Mammary epithelial cell (primary cell): ENCODE measurements at regions of chr2 and their contacts with region 1.

Region 1: DNA sequence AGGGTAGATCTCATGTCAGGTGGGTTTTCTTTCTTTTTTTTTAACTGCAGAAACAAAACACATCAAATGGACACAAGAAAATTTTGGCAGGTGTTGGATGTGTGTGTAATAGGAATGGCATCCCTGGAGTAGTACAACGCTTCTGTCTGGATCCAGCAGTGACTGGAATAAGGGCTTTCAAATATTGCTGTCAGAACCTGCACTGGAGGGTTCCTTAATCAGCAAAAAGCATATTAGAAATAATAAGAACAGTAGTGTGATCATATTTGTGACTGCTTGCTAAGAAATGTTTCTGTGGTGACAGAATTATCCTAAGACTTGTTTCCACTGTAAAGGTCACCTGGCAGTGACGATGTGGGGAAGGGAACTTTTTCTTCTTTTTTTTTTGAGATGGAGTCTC is 30.8 kb downstream of the CREG2 start:
- DNase-seq: peak; percentile 75
- H3K4me3 ChIP-seq: no peak overlapping the region
- H3K27ac ChIP-seq: peak overlapping the region; percentile 16
- H3K4me1 ChIP-seq: peaks cover 52% of the 10 kb centered on the region
- H3K27me3 ChIP-seq: no peaks in the 10 kb centered on the region
- CTCF ChIP-seq: no peak

Region 2: DNA sequence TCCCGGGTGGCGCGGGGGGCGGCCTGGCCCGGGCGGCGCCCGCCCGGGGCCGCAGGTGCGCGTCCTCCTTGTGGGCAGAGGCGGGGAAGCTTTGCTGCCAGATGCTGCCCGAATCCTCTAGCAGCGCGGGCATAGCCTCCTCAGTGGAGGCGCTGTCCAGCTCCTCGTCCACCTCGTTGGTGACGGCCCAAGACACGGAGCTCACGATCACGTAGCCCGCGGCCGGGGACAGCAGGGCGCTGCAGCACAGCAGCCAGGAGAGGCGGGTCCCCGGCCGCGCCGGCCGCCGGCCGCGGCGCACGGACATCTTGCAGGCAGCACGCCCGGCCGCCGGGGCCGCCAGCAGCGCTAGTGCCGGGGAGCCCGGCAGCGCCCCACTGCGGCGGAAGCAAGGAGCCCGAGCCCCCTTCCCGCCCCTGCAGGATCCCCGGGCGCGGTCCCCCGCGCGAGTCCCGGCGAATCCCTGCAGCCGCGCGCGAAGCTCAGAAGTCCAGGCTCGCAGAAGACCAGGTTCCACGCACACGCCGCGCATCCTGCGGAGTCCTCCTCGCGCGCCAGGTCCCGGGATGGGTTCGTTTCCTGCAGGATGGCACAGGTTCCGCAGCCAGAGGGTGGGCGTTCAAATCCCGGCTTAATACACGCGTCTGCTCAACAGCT is 30.8 kb after region 1 on chr2 and contains the start of gene CREG2:
- CTCF ChIA-PET with region 1: interaction called, 3 read pairs
- dilution Hi-C with region 1: no loop called
- in situ Hi-C with region 1: no loop called
- intact Hi-C with region 1: loop called (anchors 2 kb)
- DNase-seq: peak; percentile 55
- H3K4me3 ChIP-seq: peak within 1 kb of the TSS; percentile 51 to 67 (median 59)
- H3K27ac ChIP-seq: no peak within 1 kb of the TSS
- H3K4me1 ChIP-seq: peaks cover 21% of the 10 kb centered on the region
- H3K27me3 ChIP-seq: no peaks in the 10 kb centered on the region
- CTCF ChIP-seq: peak; percentile 34 to 63
- total RNA-seq, gene CREG2: under 0.01 to 1.4 TPM